Activated CD4-positive, alpha-beta T cell treated with anti-CD3 and anti-CD28 coated beads for 36 hours (primary cell): ENCODE measurements at regions of chr1 and their contacts with region 1.

Region 1: DNA sequence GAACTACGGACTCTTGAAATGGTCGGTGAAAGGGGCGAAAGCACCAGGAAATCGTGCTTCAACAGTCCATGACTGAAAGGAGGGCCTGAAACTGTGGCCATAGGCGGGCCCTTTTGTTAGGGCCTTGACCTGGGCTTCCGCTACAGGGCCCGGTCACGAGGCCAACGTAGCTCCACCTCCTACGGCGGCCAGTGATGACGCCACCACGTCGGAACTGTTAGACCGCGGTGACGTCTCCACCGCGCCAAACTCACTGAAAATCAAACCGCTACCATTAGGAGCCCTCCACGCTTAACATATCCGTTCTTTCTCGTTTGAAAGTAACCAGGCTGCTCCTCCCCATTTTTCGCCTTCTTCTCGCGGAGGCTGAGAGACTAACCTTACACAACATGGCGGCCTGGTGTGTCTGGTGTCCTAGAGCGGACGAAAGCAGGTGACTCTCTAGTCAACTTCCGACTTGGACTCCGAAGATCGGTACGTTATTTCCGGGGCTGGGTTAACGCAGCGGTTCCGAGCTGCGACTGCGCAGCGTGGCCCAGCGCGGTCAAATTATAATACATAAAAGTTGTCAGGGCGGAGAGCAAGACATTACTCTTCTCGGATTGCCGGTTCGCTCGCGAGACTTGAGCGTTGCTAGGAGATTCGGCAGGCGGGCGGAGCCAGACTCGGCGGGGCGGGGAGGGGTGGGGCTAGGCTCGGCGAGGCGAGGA is 376 bp upstream of the CACYBP start:
- DNase-seq: peak; percentile 99
- ATAC-seq: peak; percentile 85
- H3K4me3 Mint-ChIP-seq: no peak overlapping the region
- H3K27ac Mint-ChIP-seq: no peak overlapping the region
- H3K4me1 Mint-ChIP-seq: peaks cover 41% of the 10 kb centered on the region
- H3K27me3 Mint-ChIP-seq: no peaks in the 10 kb centered on the region

Region 2: DNA sequence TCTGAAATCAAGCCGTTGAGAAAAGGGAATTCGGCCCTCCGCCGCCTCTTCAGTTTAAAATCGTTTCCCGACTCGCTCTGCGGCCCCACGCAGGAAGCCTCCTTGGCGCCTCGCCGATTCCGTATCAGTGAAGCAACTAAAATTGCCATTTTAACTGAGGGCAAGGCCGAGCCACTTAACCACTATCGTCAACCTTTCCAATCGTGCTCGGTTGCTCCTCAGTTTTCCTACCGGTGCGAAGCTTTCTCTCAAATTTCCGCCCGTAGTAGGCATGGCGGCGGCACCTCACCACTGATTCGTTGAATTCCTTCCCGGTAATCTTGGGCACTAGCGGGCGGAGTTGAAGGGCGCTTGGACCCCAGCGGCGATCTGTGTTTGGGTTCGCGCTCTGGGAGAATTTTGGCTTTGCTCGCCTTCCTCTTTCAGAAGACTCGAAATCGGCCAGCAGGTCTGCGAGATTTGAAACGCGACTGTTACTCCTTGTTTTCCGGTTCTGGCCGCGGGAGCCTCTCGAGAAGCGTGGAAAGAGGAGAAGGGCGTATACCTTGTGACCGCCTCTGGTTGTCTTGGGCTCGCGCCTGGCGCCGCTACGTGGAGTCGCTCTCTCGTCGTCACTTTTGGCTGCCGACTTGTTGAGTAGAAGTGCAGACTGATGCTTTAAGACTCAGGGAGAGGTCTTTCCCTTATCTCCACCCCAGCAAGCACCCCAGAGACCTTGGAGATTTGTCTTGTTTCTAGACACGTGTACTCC is 1174.9 kb before region 1 on chr1 and contains the starts of genes CENPL and DARS2:
- CTCF ChIA-PET with region 1: no interaction called
- POLR2A ChIA-PET with region 1: no interaction called
- intact Hi-C with region 1: loop called in 1 of 2 experiments (anchors 5 kb)
- DNase-seq: peak; percentile 94
- ATAC-seq: peak; percentile 86
- H3K4me3 Mint-ChIP-seq: peak within 1 kb of the TSS; percentile 94
- H3K27ac Mint-ChIP-seq: peak within 1 kb of the TSS; percentile 99
- H3K4me1 Mint-ChIP-seq: peaks cover 55% of the 10 kb centered on the region
- H3K27me3 Mint-ChIP-seq: no peaks in the 10 kb centered on the region
- total RNA-seq, gene CENPL: 26.1 to 27.2 TPM
- total RNA-seq, gene DARS2: 57.2 to 62.0 TPM

Region 3: GRCh38 chr1:174159252-174160108 is 839.9 kb before region 1 on chr1 and contains the start of gene RABGAP1L:
- CTCF ChIA-PET with region 1: no interaction called
- POLR2A ChIA-PET with region 1: no interaction called
- intact Hi-C with region 1: loop called in 1 of 2 experiments (anchors 1 kb)
- DNase-seq: peak; percentile 97
- ATAC-seq: peak; percentile 83
- H3K4me3 Mint-ChIP-seq: peak within 1 kb of the TSS; percentile 93
- H3K27ac Mint-ChIP-seq: peak within 1 kb of the TSS; percentile 95
- H3K4me1 Mint-ChIP-seq: peaks cover 59% of the 10 kb centered on the region
- H3K27me3 Mint-ChIP-seq: no peaks in the 10 kb centered on the region
- total RNA-seq, gene RABGAP1L: 22.6 to 29.9 TPM

Region 4: DNA sequence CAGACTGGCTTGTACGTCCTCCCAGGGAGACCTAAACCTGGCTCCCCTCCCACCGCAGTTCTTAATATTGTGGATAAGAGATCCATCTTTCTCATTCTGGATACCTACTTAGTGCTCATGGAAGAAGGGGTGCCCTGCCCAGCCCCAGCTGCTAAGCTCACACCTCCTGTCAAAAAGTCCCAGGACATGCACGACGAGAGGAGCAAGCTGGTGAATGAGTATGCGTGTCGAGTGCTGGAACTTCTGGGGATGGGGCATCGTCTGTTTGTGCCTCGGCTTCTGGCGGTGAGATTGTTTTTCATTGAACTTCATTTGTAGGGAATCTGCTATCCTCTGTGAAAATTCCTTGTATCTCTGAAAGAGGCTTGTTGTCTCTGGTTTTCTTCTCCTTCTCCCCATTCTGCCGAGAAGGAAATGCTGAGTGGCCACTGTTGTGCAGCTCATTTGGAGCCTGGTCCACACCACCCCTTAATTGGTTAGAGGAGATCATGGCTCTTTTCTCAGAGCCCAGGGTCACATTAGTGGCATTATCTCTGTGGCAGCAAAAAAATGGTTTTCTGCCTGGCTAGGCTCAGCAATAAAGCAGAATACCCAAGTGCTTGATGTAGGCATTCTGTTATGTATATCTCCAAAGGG is 199.0 kb before region 1 on chr1:
- CTCF ChIA-PET with region 1: interaction called, 3 read pairs
- POLR2A ChIA-PET with region 1: interaction called, 15 read pairs
- intact Hi-C with region 1: no loop called
- DNase-seq: peak; percentile 28
- ATAC-seq: no peak
- H3K4me3 Mint-ChIP-seq: no peak overlapping the region
- H3K27ac Mint-ChIP-seq: no peak overlapping the region
- H3K4me1 Mint-ChIP-seq: peaks cover 5% of the 10 kb centered on the region
- H3K27me3 Mint-ChIP-seq: no peaks in the 10 kb centered on the region

Region 5: DNA sequence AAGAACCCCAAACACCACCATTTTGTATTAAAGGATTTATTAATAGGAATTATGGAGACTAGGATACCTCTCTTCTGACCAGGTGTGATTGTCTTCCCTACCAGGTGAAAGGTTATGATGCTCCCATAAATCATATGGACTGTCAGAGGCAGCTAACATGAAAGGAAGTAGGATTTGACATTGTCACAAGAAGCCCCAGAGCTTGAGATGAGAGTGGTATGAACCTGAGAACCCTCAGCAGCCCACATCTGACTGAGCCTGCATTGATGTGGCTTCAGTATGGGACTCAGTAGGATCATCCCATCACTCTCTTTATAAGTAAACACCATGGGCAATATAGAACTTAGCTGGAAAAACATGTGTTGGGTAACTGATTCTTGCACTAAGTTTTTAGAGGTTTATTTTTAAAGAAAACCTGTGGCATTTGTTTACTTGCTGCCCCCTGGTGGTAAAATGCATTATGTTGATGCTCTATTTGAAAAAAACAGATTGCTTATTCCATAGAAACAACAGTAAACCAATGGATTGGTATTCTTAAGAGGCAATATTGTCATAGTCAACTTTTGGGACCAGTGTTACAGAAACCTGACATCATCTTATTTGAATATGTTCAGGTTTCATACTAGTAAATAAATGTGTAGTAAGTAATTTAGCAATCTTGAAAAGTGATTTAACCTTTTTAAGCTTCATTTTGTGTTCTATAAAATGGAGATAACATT is 16.2 kb before region 1 on chr1:
- CTCF ChIA-PET with region 1: interaction called, 11 read pairs
- POLR2A ChIA-PET with region 1: interaction called, 3 read pairs
- intact Hi-C with region 1: no loop called
- DNase-seq: peak; percentile 44
- ATAC-seq: peak; percentile 39
- H3K4me3 Mint-ChIP-seq: no peak overlapping the region
- H3K27ac Mint-ChIP-seq: no peak overlapping the region
- H3K4me1 Mint-ChIP-seq: peaks cover 19% of the 10 kb centered on the region
- H3K27me3 Mint-ChIP-seq: no peaks in the 10 kb centered on the region